Calu3 (cell line): ENCODE measurements at regions of chr5 and their contacts with region 1.

Region 1: DNA sequence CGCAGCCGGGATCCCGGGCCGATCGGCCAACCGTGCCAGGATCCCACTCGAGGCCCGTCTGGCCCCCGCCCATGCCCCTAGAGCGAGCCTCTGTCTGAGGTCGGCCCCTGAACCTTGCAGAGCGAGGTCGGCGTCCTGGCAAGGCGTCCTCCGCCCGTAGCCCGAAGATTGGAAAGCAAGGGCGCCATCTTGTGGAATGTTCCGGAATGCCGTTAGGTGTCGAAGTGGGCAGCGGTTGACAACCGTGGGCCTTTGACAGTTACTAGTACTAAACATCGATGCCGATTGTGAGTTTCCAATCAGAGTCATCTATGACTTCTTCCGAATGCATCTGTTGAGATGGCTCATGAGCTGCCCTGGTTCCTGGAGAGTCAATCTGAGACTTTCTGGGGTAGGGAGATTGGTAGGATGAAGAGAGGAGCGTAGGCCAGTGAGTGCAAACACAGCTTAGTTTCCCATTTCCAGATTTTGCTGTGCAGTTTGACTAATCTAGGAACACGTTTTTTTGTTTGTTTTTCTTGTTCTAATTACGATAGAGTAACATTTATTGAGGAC is 923 bp upstream of the PLK2 start:
- DNase-seq: peak; percentile 93
- H3K4me3 Mint-ChIP-seq: peak overlapping the region; percentile 76
- H3K27ac Mint-ChIP-seq: peak overlapping the region; percentile 85
- H3K4me1 Mint-ChIP-seq: peaks cover 19% of the 10 kb centered on the region
- H3K27me3 Mint-ChIP-seq: no peaks in the 10 kb centered on the region
- CTCF ChIP-seq: peak; percentile 72

Region 2: GRCh38 chr5:57298295-57298984 is 1162.4 kb before region 1 on chr5:
- CTCF ChIA-PET with region 1: interaction called, 11 read pairs
- intact Hi-C with region 1: loop called (anchors 1 kb)
- DNase-seq: peak; percentile 92
- H3K4me3 Mint-ChIP-seq: no peak overlapping the region
- H3K27ac Mint-ChIP-seq: peak overlapping the region; percentile 40
- H3K4me1 Mint-ChIP-seq: peaks cover 53% of the 10 kb centered on the region
- H3K27me3 Mint-ChIP-seq: no peaks in the 10 kb centered on the region
- CTCF ChIP-seq: peak; percentile 64

Region 3: GRCh38 chr5:57499262-57500050 is 961.4 kb before region 1 on chr5:
- CTCF ChIA-PET with region 1: interaction called, 31 read pairs
- intact Hi-C with region 1: loop called (anchors 1 kb)
- DNase-seq: peak; percentile 52
- H3K4me3 Mint-ChIP-seq: no peak overlapping the region
- H3K27ac Mint-ChIP-seq: peak overlapping the region; percentile 56
- H3K4me1 Mint-ChIP-seq: peaks cover 81% of the 10 kb centered on the region
- H3K27me3 Mint-ChIP-seq: no peaks in the 10 kb centered on the region
- CTCF ChIP-seq: peak; percentile 63

Region 4: DNA sequence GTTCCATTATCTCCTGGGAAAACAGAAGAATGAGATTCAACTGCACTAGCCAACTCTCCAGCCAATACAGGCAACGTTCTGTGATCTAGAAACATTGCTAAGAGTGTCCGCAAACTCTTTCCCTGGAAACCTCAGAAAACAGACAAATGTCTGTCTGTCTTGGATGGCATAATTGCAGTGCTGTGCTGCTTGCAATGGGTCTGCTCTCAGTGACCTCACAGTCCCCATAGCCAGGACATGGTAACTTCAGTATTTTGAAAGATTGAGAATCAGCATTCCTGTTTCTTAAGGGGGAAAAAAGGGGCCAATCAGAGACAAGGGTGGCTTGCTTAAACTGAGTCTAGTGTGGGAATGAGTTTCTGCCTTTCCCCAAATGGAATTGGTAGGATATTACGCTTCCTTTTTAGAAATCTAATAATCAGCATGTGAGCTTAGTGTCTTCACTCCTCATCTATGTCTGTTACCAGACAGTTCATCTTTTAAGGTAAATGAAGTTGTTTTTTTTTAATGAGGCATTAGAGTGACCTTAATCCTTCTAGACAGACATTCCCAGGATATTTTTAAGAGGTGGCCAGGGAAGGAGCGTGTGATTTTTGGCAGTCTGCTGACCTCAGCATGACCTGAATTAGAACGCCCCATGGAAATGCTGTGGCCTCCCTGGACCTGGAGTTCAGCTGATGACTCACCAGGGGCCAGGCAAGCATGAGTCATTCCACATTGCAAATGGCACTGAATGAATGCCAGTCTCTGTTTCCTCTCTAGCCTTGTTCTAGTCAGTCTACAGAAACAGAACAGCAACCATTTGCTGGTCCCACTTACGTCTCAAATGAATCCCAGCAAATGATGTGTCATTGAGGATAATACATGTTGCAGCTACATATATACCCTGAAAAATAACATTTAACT is 768.0 kb before region 1 on chr5:
- CTCF ChIA-PET with region 1: no interaction called
- intact Hi-C with region 1: loop called (anchors 5 kb)
- DNase-seq: peak; percentile 86
- H3K4me3 Mint-ChIP-seq: peak overlapping the region; percentile 71
- H3K27ac Mint-ChIP-seq: peak overlapping the region; percentile 98
- H3K4me1 Mint-ChIP-seq: peaks cover 51% of the 10 kb centered on the region
- H3K27me3 Mint-ChIP-seq: no peaks in the 10 kb centered on the region
- CTCF ChIP-seq: no peak

Region 5: DNA sequence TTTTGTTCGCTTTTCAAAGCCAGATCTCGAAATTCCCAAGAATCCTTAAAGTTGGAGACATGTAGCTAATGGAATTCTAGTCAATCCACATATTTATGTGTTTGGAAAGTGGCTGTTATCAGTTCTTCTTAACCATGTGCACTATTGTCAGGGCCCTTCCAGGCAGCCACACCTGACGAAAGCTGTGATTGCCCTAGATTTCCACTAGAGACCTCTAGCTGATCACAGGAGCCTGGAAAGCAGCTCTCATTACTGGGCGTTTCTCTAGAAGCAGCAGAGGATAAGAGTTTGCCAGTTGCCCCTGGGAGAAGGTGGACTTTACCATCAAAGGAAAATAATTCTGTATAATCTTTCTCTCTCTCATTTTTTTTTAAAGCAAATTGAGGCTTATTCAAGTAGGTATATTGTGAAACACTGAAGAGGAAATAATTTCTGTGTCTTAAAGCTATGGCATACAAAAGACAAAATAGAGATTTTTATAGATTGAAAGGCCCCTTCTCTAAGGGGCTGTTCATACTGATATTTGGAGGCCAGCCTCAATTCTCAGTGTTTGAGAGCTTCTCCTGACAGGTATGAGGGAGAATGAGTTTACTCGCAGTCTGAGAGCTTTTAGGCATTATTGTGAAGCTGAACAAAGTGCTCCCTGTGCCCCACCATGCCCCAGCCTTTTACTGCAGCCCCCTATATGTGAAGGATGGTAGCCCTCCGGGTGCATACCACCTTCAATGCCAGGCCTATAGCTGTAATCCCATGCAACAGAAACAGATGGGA is 572.8 kb before region 1 on chr5:
- CTCF ChIA-PET with region 1: interaction called, 25 read pairs
- intact Hi-C with region 1: loop called (anchors 1 kb)
- DNase-seq: peak; percentile 53
- H3K4me3 Mint-ChIP-seq: no peak overlapping the region
- H3K27ac Mint-ChIP-seq: no peak overlapping the region
- H3K4me1 Mint-ChIP-seq: peaks cover 17% of the 10 kb centered on the region
- H3K27me3 Mint-ChIP-seq: no peaks in the 10 kb centered on the region
- CTCF ChIP-seq: no peak

Region 6: DNA sequence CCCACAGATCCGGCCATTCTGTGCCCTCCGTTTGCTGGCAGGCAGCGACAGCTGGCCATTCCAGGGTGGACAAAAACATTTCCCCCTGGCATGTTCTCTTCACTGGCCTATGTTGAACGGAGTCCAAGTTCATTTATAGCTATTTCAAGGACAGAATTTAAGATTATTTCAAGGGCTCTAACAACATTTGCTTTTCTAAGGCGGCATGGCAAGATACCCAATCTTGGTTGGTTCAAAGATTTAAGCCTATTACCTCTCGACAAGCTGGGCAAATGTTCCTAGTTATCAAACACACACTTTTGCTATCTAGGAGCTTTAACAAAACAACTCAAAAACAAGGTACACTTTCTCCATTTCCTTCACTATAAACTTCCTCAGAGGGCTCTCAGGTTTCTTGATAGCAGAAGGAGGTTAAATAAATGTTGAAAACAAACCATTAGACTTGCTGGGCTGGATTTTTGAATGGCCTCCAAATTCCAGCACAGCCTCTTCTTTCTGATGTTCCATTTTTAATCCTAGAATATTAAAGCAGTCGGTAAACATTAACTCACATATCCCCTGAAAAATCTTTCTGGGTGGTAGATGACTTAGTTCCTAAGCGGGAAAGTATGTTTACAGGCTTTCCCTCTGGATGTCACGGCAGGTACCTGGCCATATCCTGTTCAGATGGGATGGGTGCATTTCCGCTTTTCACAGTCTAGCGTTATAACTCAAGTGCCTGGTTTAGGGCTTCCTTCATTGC is 333.2 kb before region 1 on chr5:
- CTCF ChIA-PET with region 1: no interaction called
- intact Hi-C with region 1: loop called (anchors 5 kb)
- DNase-seq: peak; percentile 32
- H3K4me3 Mint-ChIP-seq: peak overlapping the region; percentile 24
- H3K27ac Mint-ChIP-seq: peak overlapping the region; percentile 51
- H3K4me1 Mint-ChIP-seq: peaks cover 30% of the 10 kb centered on the region
- H3K27me3 Mint-ChIP-seq: no peaks in the 10 kb centered on the region
- CTCF ChIP-seq: no peak

Region 7: DNA sequence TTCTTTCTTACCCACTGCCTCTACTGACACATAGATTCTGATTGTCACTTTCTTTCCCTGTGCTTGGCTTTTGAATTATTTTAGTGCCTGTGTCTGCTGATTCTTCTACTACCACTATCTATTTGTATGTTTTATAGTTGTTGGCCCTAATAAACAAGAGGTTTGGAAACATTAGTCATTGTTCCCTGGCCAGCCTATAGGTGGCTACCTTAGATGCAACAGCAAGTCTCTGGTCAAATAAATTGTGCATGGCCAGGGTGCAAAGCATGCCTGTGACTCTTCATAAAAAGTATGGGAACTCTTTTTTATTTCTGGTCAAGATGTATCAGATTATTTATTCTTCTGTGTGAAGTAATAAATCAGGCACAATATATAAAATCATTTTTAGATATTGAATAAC is 125.3 kb before region 1 on chr5:
- CTCF ChIA-PET with region 1: no interaction called
- intact Hi-C with region 1: loop called (anchors 5 kb)
- DNase-seq: no peak
- H3K4me3 Mint-ChIP-seq: no peak overlapping the region
- H3K27ac Mint-ChIP-seq: no peak overlapping the region
- H3K4me1 Mint-ChIP-seq: peaks cover 8% of the 10 kb centered on the region
- H3K27me3 Mint-ChIP-seq: no peaks in the 10 kb centered on the region
- CTCF ChIP-seq: peak; percentile 32

Region 8: DNA sequence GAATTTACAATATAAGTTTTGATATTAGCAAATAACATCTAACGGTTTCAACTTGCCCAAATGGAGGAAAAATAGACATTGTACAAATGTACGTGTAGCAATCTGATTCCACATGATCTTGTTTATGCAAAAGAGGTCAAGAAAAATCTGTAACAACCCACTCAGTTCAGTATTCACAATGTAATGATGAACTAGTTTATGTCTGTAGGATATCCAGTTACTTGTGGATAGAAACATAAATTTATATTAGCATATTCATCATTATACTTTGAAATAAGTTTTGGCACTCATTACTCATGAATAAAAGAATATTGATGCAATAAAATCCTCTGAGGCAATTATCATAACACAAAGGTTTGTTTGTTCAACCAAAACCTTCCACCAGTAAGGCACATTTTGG is 29.0 kb before region 1 on chr5:
- CTCF ChIA-PET with region 1: no interaction called
- intact Hi-C with region 1: no loop called
- DNase-seq: no peak
- H3K4me3 Mint-ChIP-seq: no peak overlapping the region
- H3K27ac Mint-ChIP-seq: no peak overlapping the region
- H3K4me1 Mint-ChIP-seq: no peaks in the 10 kb centered on the region
- H3K27me3 Mint-ChIP-seq: no peaks in the 10 kb centered on the region
- CTCF ChIP-seq: no peak